ENCODE measurements at regions of chr15 and their contacts with region 1.

Region 1: GRCh38 chr15:39580117-39580484 is 778 bp upstream of the THBS1 start:
- DNase-seq: peak; percentile 94 to 99 (median 98)
- ATAC-seq: peak; percentile 84 to 90
- H3K4me3 ChIP-seq: peak overlapping the region; percentile 44
- H3K27ac ChIP-seq: peak overlapping the region; percentile 61
- H3K4me1 ChIP-seq: no peaks in the 10 kb centered on the region
- H3K27me3 ChIP-seq: no peaks in the 10 kb centered on the region

Region 2: GRCh38 chr15:38699633-38700230 is 880.4 kb before region 1 on chr15:
- intact Hi-C with region 1: loop called in 1 of 4 experiments (anchors 10 kb)
- DNase-seq: peak in 2 of 3 donors; percentile 52 to 83
- ATAC-seq: peak; percentile 23 to 62
- H3K4me3 ChIP-seq: no peak overlapping the region
- H3K27ac ChIP-seq: no peak overlapping the region
- H3K4me1 ChIP-seq: no peaks in the 10 kb centered on the region
- H3K27me3 ChIP-seq: no peaks in the 10 kb centered on the region

Region 3: GRCh38 chr15:38828031-38828532 is 752.0 kb before region 1 on chr15:
- intact Hi-C with region 1: loop called in 1 of 4 experiments (anchors 10 kb)
- DNase-seq: no peak
- ATAC-seq: peak; percentile 39 to 57
- H3K4me3 ChIP-seq: no peak overlapping the region
- H3K27ac ChIP-seq: no peak overlapping the region
- H3K4me1 ChIP-seq: no peaks in the 10 kb centered on the region
- H3K27me3 ChIP-seq: no peaks in the 10 kb centered on the region

Region 4: DNA sequence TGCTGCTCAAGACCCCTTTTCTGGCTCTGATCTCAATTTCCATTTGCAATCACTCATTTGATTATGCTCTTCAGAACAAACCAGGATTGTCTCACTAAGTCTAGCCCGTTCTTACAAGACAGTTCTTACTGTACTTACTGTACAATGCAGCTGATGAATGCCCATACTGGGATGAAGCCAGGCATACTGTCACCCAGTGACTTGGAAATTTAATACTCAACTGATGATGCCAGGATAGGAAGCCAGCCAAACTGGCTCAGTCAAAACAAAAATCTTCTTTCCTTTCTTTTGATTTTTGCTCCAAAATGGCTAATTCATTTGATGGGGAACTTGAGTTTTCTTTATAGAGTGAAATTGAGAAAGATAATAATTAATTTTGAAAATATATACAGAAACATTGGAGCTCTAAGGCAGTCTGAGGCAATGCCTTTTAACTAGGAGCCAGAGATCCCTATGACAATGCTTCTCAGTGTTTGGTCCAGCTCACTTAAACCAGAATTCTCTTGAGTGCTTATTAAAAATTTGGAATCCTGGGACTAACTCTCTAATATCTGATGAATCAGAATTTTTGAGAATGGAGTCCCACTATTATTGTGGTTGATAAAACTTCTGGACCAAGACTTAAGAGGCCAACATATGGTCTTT is 264.8 kb before region 1 on chr15:
- intact Hi-C with region 1: loop called in 1 of 4 experiments (anchors 5 kb)
- DNase-seq: no peak
- ATAC-seq: no peak
- H3K4me3 ChIP-seq: no peak overlapping the region
- H3K27ac ChIP-seq: no peak overlapping the region
- H3K4me1 ChIP-seq: no peaks in the 10 kb centered on the region
- H3K27me3 ChIP-seq: no peaks in the 10 kb centered on the region

Region 5: GRCh38 chr15:39461536-39462130 is 118.5 kb before region 1 on chr15:
- intact Hi-C with region 1: no loop called
- DNase-seq: peak; percentile 83 to 89 (median 84)
- ATAC-seq: peak; percentile 74 to 84
- H3K4me3 ChIP-seq: no peak overlapping the region
- H3K27ac ChIP-seq: no peak overlapping the region
- H3K4me1 ChIP-seq: peaks cover 5% of the 10 kb centered on the region
- H3K27me3 ChIP-seq: no peaks in the 10 kb centered on the region

Region 6: GRCh38 chr15:39472621-39473297 is 107.3 kb before region 1 on chr15:
- intact Hi-C with region 1: loop called in 1 of 4 experiments (anchors 10 kb)
- DNase-seq: peak; percentile 89 to 90 (median 90)
- ATAC-seq: peak; percentile 96
- H3K4me3 ChIP-seq: no peak overlapping the region
- H3K27ac ChIP-seq: peak overlapping the region; percentile 84
- H3K4me1 ChIP-seq: no peaks in the 10 kb centered on the region
- H3K27me3 ChIP-seq: no peaks in the 10 kb centered on the region

Measured in right cardiac atrium (tissue), 5 donors.